ENCODE measurements at regions of chr19 and their contacts with region 1.

Region 1: GRCh38 chr19:35775298-35776110 is at the start of gene ARHGAP33:
- DNase-seq: peak; percentile 99
- H3K4me3 ChIP-seq: peak within 1 kb of the TSS; percentile 76 to 97 (median 81)
- H3K27ac ChIP-seq: peak within 1 kb of the TSS in 3 of 4 donors; percentile 63 to 74 (median 69)
- H3K4me1 ChIP-seq: peaks cover 0 to 19% (median 14%) of the 10 kb centered on the region in 4 donors
- H3K27me3 ChIP-seq: no peaks in the 10 kb centered on the region
- CTCF ChIP-seq: no peak
- EP300 ChIP-seq: no peak
- POLR2A ChIP-seq: no peak
- total RNA-seq, gene ARHGAP33: 4.4 to 11.9 (median 8.5) TPM

Region 2: DNA sequence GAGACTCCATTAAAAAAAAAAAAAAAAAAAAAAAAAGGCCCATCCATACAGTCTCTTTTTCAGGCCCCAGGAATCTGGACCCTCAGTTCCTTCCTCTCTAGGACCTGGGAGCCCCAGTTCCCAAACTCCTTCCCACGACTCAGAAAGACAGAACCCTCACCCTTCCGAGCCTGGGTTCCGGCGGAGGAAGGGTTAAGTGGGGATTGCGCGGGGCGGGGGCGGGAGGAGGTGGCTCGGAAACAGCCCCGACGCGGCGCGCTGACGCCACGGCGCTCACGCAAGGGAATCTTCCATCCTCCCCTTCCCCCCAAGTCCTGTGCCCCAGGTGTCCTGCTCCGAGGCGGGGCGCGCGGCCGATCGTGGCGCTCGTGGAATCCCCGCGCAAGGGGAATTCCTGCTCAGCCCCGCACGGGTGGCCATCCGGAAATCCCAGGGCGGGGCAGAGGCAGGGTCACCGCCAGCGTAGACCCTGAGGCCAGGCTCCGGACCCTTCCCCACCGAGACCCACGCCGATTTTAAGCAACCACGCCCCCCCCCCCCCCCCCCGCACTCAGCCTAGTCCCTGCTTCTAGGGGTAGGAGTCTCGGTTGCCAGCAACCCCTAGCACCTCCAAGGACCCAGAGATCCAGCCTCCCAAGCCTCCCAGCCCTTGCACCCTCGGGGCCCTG is 124.2 kb after region 1 on chr19:
- intact Hi-C with region 1: loop called (anchors 5 kb)
- DNase-seq: peak; percentile 92
- H3K4me3 ChIP-seq: peak overlapping the region; percentile 54 to 74 (median 62)
- H3K27ac ChIP-seq: peak overlapping the region; percentile 82 to 95 (median 90)
- H3K4me1 ChIP-seq: peaks cover 0 to 34% (median 25%) of the 10 kb centered on the region in 4 donors
- H3K27me3 ChIP-seq: no peaks in the 10 kb centered on the region
- CTCF ChIP-seq: no peak
- EP300 ChIP-seq: peak in 2 of 4 donors; percentile 7 to 78
- POLR2A ChIP-seq: peak in 1 of 2 donors; percentile 64

Measured in sigmoid colon (tissue), 7 donors.